ENCODE measurements at regions of chr1 and their contacts with region 1.

Region 1: DNA sequence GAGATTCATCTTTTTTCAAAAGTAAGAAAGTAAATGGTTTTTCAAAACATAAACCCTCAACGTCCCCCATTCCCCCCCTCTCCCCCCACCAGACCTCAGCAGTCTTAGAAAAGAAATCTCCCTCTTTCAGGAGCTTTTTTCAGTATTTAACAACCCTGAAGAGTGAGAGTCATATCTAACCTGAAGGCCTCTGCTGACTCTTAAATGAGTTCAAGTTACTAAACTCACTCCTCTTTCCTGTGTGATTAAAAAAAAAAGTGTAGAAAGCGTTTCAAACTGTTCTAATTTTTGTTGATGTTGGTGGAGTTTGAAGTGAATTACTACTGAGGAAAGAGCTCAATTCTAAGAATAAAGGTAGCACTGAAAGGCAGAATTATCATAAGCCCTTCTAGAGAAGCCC is 93.7 kb downstream of the VAV3 start:
- DNase-seq: no peak
- H3K4me3 ChIP-seq: no peak overlapping the region
- H3K27ac ChIP-seq: no peak overlapping the region
- H3K4me1 ChIP-seq: peaks cover 41% of the 10 kb centered on the region
- CTCF ChIP-seq: no peak

Region 2: DNA sequence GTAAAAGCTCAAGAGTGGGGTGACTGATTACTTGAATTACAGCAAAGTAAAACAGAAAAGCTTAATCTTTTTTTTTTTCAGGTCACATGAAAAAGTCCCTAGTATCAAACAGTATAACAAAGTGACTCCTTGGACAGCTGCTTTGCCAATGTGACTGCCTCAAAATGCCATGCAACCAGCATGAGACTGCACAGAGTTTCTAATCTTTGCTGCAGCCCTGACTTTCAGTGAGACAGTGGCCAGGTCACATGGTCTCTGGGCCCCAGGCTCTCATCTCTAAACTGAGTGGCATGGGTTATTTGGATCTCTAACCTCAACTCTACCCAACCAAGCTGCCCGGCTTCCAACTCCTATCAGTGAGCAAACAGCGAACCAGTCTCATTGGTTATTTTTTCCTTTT is 75.3 kb before region 1 on chr1:
- CTCF ChIA-PET with region 1: interaction called, 4 read pairs
- POLR2A ChIA-PET with region 1: interaction called, 13 read pairs
- intact Hi-C with region 1: no loop called
- DNase-seq: peak; percentile 42
- H3K4me3 ChIP-seq: peak overlapping the region; percentile 39
- H3K27ac ChIP-seq: peak overlapping the region; percentile 68
- H3K4me1 ChIP-seq: peaks cover 55% of the 10 kb centered on the region
- CTCF ChIP-seq: no peak

Region 3: DNA sequence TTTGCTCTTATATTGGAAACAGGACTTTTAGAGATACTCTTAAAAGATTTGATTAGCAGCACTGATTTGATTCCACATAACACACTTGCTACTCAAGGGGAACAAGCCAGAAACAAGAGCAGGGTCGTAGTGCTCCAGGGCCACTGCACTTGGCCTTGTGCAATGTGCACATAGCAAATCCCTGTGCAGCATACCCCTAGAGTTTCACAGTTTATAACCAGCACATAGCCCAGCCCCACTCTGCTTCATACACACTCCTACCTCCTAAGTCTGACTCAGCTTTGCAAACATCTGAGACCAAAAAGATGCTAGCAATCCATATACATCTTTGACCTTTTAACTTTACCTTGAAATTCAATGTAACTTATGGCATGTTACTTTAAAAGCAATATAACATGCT is 63.9 kb before region 1 on chr1:
- CTCF ChIA-PET with region 1: no interaction called
- POLR2A ChIA-PET with region 1: no interaction called
- intact Hi-C with region 1: no loop called
- DNase-seq: no peak
- H3K4me3 ChIP-seq: no peak overlapping the region
- H3K27ac ChIP-seq: no peak overlapping the region
- H3K4me1 ChIP-seq: peaks cover 39% of the 10 kb centered on the region
- CTCF ChIP-seq: no peak

Region 4: GRCh38 chr1:107851418-107851817 is 19.8 kb before region 1 on chr1:
- CTCF ChIA-PET with region 1: interaction called, 3 read pairs
- POLR2A ChIA-PET with region 1: interaction called, 8 read pairs
- intact Hi-C with region 1: loop called (anchors 2 kb)
- DNase-seq: no peak
- H3K4me3 ChIP-seq: no peak overlapping the region
- H3K27ac ChIP-seq: no peak overlapping the region
- H3K4me1 ChIP-seq: peaks cover 6% of the 10 kb centered on the region
- CTCF ChIP-seq: no peak

Region 5: DNA sequence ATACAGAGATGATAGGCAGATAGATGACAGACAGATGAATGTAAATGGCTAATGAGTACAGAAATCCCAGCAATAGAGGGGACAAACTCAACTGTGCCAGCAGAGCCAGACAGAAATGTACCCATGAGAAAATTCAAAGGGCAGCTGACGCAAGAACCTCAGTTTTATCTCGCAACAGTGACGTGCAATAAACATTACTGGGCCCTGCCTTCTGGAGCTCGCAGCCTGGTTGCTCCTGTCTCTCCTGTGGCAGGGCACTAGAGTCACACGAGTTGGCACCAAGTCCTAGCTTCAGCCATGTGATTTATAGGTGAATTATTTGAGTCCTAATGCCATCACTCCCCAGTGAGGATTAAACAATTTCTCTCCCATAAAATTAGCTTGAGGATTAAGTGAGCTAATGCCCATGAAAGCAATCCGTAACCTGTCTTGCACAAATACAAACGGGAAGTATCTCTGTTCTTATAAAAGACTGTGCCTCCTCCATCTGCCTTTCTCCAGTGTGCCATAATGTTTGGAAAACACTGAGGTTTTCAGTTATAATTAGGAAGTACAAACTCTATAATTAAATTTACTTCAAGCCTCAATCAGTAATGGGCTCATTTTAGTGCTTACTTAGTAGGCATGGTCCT is 43.0 kb after region 1 on chr1:
- CTCF ChIA-PET with region 1: no interaction called
- POLR2A ChIA-PET with region 1: no interaction called
- intact Hi-C with region 1: no loop called
- DNase-seq: no peak
- H3K4me3 ChIP-seq: no peak overlapping the region
- H3K27ac ChIP-seq: no peak overlapping the region
- H3K4me1 ChIP-seq: no peaks in the 10 kb centered on the region
- CTCF ChIP-seq: no peak

Measured in OCI-LY7 (cell line).